Endothelial cell of umbilical vein (primary cell): ENCODE measurements at regions of chr19 and their contacts with region 1.

Region 1: GRCh38 chr19:16283210-16284061 is 41.2 kb upstream of the KLF2 start:
- DNase-seq: peak; percentile 97
- H3K4me3 ChIP-seq: peak overlapping the region in 1 of 3 experiments; percentile 2
- H3K27ac ChIP-seq: peak overlapping the region; percentile 97
- H3K4me1 ChIP-seq: peaks cover 28% of the 10 kb centered on the region
- H3K27me3 ChIP-seq: no peaks in the 10 kb centered on the region
- CTCF ChIP-seq: no peak
- POLR2A ChIP-seq: peak; percentile 94

Region 2: GRCh38 chr19:16076154-16076957 is 207.1 kb before region 1 on chr19 and contains the start of gene TPM4:
- CTCF ChIA-PET with region 1: no interaction called
- POLR2A ChIA-PET with region 1: no interaction called
- dilution Hi-C with region 1: no loop called
- intact Hi-C with region 1: loop called (anchors 5 kb)
- DNase-seq: peak; percentile 90
- H3K4me3 ChIP-seq: peak within 1 kb of the TSS; percentile 64 to 96 (median 95)
- H3K27ac ChIP-seq: peak within 1 kb of the TSS; percentile 100
- H3K4me1 ChIP-seq: peaks cover 39% of the 10 kb centered on the region
- H3K27me3 ChIP-seq: no peaks in the 10 kb centered on the region
- CTCF ChIP-seq: no peak
- POLR2A ChIP-seq: peak; percentile 89
- total RNA-seq, gene TPM4: 875 and 924 TPM in 2 replicates

Region 3: GRCh38 chr19:16259385-16260159 is 23.9 kb before region 1 on chr19:
- CTCF ChIA-PET with region 1: interaction called, 4 read pairs
- POLR2A ChIA-PET with region 1: interaction called, 9 read pairs
- dilution Hi-C with region 1: no loop called
- intact Hi-C with region 1: loop called (anchors 1 kb)
- DNase-seq: no peak
- H3K4me3 ChIP-seq: no peak overlapping the region
- H3K27ac ChIP-seq: peak overlapping the region; percentile 56
- H3K4me1 ChIP-seq: peaks cover 21% of the 10 kb centered on the region
- H3K27me3 ChIP-seq: no peaks in the 10 kb centered on the region
- CTCF ChIP-seq: no peak
- POLR2A ChIP-seq: no peak

Region 4: GRCh38 chr19:16330368-16330801 is 46.9 kb after region 1 on chr19:
- CTCF ChIA-PET with region 1: interaction called, 11 read pairs
- POLR2A ChIA-PET with region 1: interaction called, 15 read pairs
- dilution Hi-C with region 1: no loop called
- intact Hi-C with region 1: no loop called
- DNase-seq: peak; percentile 81
- H3K4me3 ChIP-seq: no peak overlapping the region
- H3K27ac ChIP-seq: no peak overlapping the region
- H3K4me1 ChIP-seq: peaks cover 28% of the 10 kb centered on the region
- H3K27me3 ChIP-seq: no peaks in the 10 kb centered on the region
- CTCF ChIP-seq: no peak
- POLR2A ChIP-seq: no peak